ENCODE measurements at regions of chr7 and their contacts with region 1.

Region 1: DNA sequence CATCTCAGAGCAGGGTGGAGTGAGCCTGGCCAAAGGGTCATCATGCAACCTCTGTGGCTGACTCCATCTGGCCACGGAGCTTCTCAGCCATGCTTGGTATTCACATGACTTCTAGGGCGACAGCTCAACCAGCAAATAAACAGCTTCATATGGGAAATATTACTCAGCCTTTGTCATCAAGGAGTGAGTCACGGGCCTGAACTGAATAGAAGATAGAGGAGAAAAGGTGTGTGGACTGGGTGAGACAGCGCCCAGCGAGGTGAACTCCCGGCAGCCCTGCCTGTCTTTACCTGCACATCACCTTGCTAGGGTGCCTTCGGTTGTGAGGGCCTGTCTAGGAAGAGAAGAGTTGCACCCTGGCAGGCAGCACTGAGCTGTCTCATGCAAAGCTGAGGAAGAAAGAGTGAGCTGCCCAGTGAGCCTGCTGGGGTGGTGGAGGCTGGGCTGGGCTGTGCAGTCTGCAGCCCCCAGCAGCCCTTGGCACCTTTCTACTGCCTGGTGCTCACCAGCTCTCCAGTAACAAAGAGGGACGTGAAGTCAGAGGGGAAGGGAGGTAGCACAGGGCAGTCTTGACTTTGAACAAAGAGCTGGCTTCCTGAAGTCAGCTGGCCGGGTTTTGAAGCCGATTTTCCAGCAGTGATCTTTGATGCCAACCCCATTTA is 114.2 kb downstream of the EGFR start:
- DNase-seq: no peak

Region 2: DNA sequence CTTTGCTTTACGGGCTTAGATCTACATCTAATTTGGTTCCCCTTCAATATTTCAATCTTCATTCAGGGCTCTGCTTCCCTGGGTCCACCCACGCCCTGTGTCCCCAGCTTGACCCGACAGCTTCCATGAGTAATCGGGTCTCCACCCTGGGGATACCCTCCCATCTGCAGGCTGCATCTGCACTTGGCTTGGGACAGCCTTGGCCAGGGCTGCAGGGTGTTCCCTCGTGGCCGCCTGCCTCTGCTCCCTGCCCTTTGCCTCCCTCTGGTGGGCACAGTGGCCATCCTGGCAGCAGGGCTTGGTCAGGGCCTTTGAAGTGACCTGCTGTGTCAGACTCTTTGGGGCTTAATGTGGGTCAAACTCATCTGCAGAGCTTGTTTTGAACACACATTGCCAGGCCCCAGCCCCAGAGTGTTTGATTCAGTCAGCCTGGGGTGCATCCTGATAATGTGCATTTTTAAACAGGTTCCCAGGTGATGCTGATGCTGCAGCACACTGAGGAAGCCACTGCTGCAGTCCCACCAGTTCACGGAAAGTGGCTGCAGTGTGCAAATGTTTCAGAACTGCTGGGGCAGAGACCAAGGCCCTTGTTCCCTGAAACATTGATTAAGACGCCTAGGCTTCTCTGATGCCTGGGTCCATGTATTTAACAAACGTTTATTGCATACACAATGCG is 293.3 kb before region 1 on chr7:
- intact Hi-C with region 1: loop called (anchors 5 kb)
- DNase-seq: peak; percentile 79

Region 3: GRCh38 chr7:54877683-54878082 is 255.3 kb before region 1 on chr7:
- intact Hi-C with region 1: no loop called
- DNase-seq: no peak

Region 4: GRCh38 chr7:55018361-55019190 is 114.4 kb before region 1 on chr7 and contains the start of gene EGFR:
- intact Hi-C with region 1: loop called (anchors 5 kb)
- DNase-seq: peak; percentile 81
- total RNA-seq, gene EGFR: 7.6 TPM

Region 5: GRCh38 chr7:55063633-55064032 is 69.4 kb before region 1 on chr7:
- intact Hi-C with region 1: loop called (anchors 5 kb)
- DNase-seq: no peak

Region 6: GRCh38 chr7:55120481-55121198 is 12.4 kb before region 1 on chr7:
- intact Hi-C with region 1: no loop called
- DNase-seq: no peak

Region 7: GRCh38 chr7:55177589-55178261 is 44.7 kb after region 1 on chr7:
- intact Hi-C with region 1: no loop called
- DNase-seq: no peak

Region 8: GRCh38 chr7:55192718-55193117 is 59.7 kb after region 1 on chr7:
- intact Hi-C with region 1: loop called (anchors 5 kb)
- DNase-seq: no peak